ENCODE measurements at regions of chr5 and their contacts with region 1.

Region 1: GRCh38 chr5:170183816-170184687 is 48.7 kb upstream of the C5orf58 start:
- DNase-seq: peak in 6 of 9 experiments; percentile 21 to 56 (median 28)
- ATAC-seq: no peak
- H3K4me3 ChIP-seq: no peak overlapping the region
- H3K4me3 Mint-ChIP-seq: no peak overlapping the region
- H3K27ac ChIP-seq: no peak overlapping the region
- H3K27ac Mint-ChIP-seq: no peak overlapping the region
- H3K4me1 ChIP-seq: no peaks in the 10 kb centered on the region
- H3K4me1 Mint-ChIP-seq: no peaks in the 10 kb centered on the region
- H3K27me3 ChIP-seq: no peaks in the 10 kb centered on the region
- H3K27me3 Mint-ChIP-seq: peaks cover 6% of the 10 kb centered on the region
- CTCF ChIP-seq: peak; percentile 56

Region 2: GRCh38 chr5:170173235-170173634 is 10.8 kb before region 1 on chr5:
- CTCF ChIA-PET with region 1: interaction called, 11 read pairs
- POLR2A ChIA-PET with region 1: interaction called, 3 read pairs
- intact Hi-C with region 1: no loop called
- DNase-seq: no peak
- ATAC-seq: no peak
- H3K4me3 ChIP-seq: no peak overlapping the region
- H3K4me3 Mint-ChIP-seq: no peak overlapping the region
- H3K27ac ChIP-seq: no peak overlapping the region
- H3K27ac Mint-ChIP-seq: no peak overlapping the region
- H3K4me1 ChIP-seq: no peaks in the 10 kb centered on the region
- H3K4me1 Mint-ChIP-seq: no peaks in the 10 kb centered on the region
- H3K27me3 ChIP-seq: no peaks in the 10 kb centered on the region
- H3K27me3 Mint-ChIP-seq: no peaks in the 10 kb centered on the region
- CTCF ChIP-seq: no peak

Measured in CD8-positive, alpha-beta T cell (primary cell).